Caco-2 (cell line): ENCODE measurements at regions of chr11 and their contacts with region 1.

Region 1: DNA sequence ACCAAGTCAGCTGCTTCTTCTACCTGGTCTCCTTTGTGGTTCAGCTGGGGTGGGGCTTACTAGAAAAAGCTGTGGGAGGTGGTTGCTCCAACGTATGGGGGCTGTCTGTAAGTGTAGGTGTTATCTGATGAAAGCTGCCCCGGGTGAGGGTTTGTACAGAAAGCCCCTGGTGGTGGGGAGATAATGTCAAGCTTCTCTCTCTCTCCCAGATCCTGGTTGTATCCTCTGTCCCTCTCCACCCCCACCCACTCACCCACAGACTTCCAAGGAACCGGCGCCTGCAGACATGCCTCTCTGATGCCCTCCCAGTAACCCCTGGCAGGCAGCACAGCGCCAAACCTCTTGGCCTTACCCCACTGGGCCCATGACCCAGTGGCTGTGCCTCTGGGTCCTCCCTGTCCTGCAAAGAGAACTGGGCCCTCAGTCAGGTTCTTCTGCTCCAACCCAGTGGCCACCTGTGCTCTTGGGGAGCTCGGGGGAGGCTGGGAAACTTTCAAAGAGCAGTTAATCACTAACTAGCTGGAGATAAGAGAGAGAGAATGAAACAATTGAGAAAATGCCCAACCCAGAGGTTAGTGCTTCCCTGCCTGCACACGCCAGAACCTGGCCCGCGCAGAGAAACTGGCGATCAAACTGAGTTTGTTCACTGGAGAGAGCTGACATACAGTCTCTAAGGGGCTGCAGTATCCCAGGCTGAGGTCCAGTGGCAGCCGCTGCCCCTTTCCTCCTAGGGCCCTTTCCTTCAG is 20.4 kb upstream of the EHF start:
- DNase-seq: peak; percentile 86 to 95
- H3K4me3 ChIP-seq: 0 out of 2 replicates have a peak overlapping the region, but pooled peaks have one; percentile 6
- H3K4me3 Mint-ChIP-seq: peak overlapping the region; percentile 71
- H3K27ac Mint-ChIP-seq: peak overlapping the region; percentile 91
- H3K4me1 ChIP-seq: peaks cover 59% of the 10 kb centered on the region
- H3K4me1 Mint-ChIP-seq: peaks cover 40% of the 10 kb centered on the region
- H3K27me3 ChIP-seq: no peaks in the 10 kb centered on the region
- H3K27me3 Mint-ChIP-seq: no peaks in the 10 kb centered on the region
- CTCF ChIP-seq: no peak

Region 2: DNA sequence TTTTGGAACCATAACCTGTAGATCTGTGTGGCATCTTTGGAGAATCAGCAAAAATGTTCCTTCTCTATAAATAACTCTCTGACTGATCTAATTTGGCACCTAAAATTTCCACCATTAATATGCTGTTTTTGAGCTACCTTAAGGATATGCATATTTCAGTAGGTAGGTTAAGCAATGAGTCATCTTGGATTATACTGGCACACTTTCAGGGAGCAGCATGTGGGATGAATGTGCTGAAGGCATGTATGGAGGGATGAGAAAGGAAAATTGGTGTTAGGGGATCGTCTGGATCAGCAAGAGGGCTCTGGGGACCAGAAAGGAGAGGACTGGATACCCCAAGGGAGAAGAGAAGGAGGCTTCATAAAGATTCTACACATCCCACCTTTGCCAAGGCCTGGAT is 42.3 kb before region 1 on chr11:
- CTCF ChIA-PET with region 1: no interaction called
- POLR2A ChIA-PET with region 1: no interaction called
- intact Hi-C with region 1: no loop called
- DNase-seq: no peak
- H3K4me3 ChIP-seq: no peak overlapping the region
- H3K4me3 Mint-ChIP-seq: no peak overlapping the region
- H3K27ac Mint-ChIP-seq: no peak overlapping the region
- H3K4me1 ChIP-seq: no peaks in the 10 kb centered on the region
- H3K4me1 Mint-ChIP-seq: no peaks in the 10 kb centered on the region
- H3K27me3 ChIP-seq: no peaks in the 10 kb centered on the region
- H3K27me3 Mint-ChIP-seq: peaks cover 2% of the 10 kb centered on the region
- CTCF ChIP-seq: no peak

Region 3: GRCh38 chr11:34640050-34640923 is 39.8 kb after region 1 on chr11:
- CTCF ChIA-PET with region 1: interaction called, 18 read pairs
- POLR2A ChIA-PET with region 1: interaction called, 27 read pairs
- intact Hi-C with region 1: loop called (anchors 1 kb)
- DNase-seq: peak; percentile 91 to 96
- H3K4me3 ChIP-seq: no peak overlapping the region
- H3K4me3 Mint-ChIP-seq: peak overlapping the region; percentile 55
- H3K27ac Mint-ChIP-seq: peak overlapping the region; percentile 66
- H3K4me1 ChIP-seq: peaks cover 58% of the 10 kb centered on the region
- H3K4me1 Mint-ChIP-seq: peaks cover 62% of the 10 kb centered on the region
- H3K27me3 ChIP-seq: no peaks in the 10 kb centered on the region
- H3K27me3 Mint-ChIP-seq: no peaks in the 10 kb centered on the region
- CTCF ChIP-seq: no peak

Region 4: DNA sequence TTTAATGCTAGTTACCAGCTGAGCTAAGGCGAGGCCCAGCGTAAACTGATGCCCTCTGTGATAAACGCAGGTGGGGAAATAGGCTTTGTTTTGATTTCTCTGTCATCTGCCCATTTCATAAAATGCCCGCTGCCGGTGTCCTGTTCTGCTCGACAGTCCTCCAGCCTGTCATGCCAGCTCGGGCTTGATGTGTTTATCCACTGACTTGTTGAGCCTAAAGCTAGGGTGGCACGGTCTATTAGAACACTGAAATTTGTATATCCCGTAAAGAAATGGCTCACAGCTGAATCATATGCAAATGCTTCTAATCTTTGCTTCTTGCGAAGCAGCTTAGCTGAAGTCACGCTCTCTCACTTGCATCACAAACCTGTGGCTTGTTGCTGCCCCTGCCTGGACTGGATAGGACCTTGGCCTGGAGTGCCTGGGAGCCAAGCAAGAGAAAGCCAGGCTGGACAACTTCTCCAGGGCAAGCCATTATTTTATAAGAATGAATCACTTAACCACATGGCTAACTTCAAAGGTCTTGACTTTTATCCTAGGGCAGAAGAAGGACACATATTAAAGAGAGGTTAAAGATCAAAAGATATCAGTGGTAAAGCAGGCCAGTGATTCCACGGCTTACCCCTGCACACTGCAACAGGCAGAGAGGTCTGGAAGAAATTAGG is 53.4 kb after region 1 on chr11:
- CTCF ChIA-PET with region 1: interaction called, 6 read pairs
- POLR2A ChIA-PET with region 1: no interaction called
- intact Hi-C with region 1: loop called (anchors 2 kb)
- DNase-seq: peak; percentile 66 to 82
- H3K4me3 ChIP-seq: no peak overlapping the region
- H3K4me3 Mint-ChIP-seq: no peak overlapping the region
- H3K27ac Mint-ChIP-seq: peak overlapping the region; percentile 15
- H3K4me1 ChIP-seq: peaks cover 21% of the 10 kb centered on the region
- H3K4me1 Mint-ChIP-seq: peaks cover 26% of the 10 kb centered on the region
- H3K27me3 ChIP-seq: no peaks in the 10 kb centered on the region
- H3K27me3 Mint-ChIP-seq: no peaks in the 10 kb centered on the region
- CTCF ChIP-seq: peak in 1 of 2 experiments; percentile 40

Region 5: DNA sequence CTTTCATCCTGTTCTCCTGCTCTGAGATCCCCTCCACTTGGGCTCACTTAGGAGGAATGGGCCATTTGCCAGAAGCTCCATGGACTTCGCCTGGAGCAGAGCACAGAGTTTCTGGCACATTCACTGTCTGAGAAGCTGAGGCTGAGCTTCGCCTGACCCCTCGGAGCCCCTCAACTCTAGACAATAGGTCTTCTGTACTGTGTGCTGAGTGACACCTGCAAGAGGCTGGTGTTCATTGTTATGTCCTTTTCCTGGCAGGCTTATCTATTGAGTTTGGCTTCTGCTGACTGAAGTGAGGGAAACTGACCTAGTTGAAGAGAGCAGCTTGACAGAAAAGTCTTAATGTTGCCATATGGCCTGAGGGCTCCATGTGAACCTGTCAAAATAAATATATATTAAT is 144.7 kb after region 1 on chr11:
- CTCF ChIA-PET with region 1: no interaction called
- POLR2A ChIA-PET with region 1: no interaction called
- intact Hi-C with region 1: loop called (anchors 1 kb)
- DNase-seq: no peak
- H3K4me3 ChIP-seq: no peak overlapping the region
- H3K4me3 Mint-ChIP-seq: no peak overlapping the region
- H3K27ac Mint-ChIP-seq: no peak overlapping the region
- H3K4me1 ChIP-seq: peaks cover 3% of the 10 kb centered on the region; the same call in 1 of the 2 replicates
- H3K4me1 Mint-ChIP-seq: peaks cover 13% of the 10 kb centered on the region
- H3K27me3 ChIP-seq: no peaks in the 10 kb centered on the region
- H3K27me3 Mint-ChIP-seq: no peaks in the 10 kb centered on the region
- CTCF ChIP-seq: no peak

Region 6: GRCh38 chr11:34916015-34916842 is 315.7 kb after region 1 on chr11 and contains the starts of genes APIP and PDHX:
- CTCF ChIA-PET with region 1: no interaction called
- POLR2A ChIA-PET with region 1: no interaction called
- intact Hi-C with region 1: loop called (anchors 1 kb)
- DNase-seq: peak; percentile 99
- H3K4me3 ChIP-seq: peak within 1 kb of the TSS; percentile 95
- H3K4me3 Mint-ChIP-seq: peak within 1 kb of the TSS; percentile 100
- H3K27ac Mint-ChIP-seq: peak within 1 kb of the TSS; percentile 100
- H3K4me1 ChIP-seq: peaks cover 7% of the 10 kb centered on the region; the same call in 1 of the 2 replicates
- H3K4me1 Mint-ChIP-seq: peaks cover 12% of the 10 kb centered on the region
- H3K27me3 ChIP-seq: no peaks in the 10 kb centered on the region
- H3K27me3 Mint-ChIP-seq: no peaks in the 10 kb centered on the region
- CTCF ChIP-seq: no peak
- total RNA-seq, gene APIP: 19.8 and 21.1 TPM in 2 replicates
- total RNA-seq, gene PDHX: 78.5 and 85.4 TPM in 2 replicates